ENCODE measurements at regions of chr1 and their contacts with region 1.

Region 1: GRCh38 chr1:26097696-26098095 is 13.9 kb upstream of the PDIK1L start:
- DNase-seq: no peak
- H3K4me3 ChIP-seq: no peak overlapping the region
- H3K27ac ChIP-seq: no peak overlapping the region
- H3K4me1 ChIP-seq: no peaks in the 10 kb centered on the region
- H3K27me3 ChIP-seq: no peaks in the 10 kb centered on the region
- CTCF ChIP-seq: no peak
- POLR2A ChIP-seq: no peak

Region 2: GRCh38 chr1:26053718-26054560 is 43.8 kb before region 1 on chr1:
- intact Hi-C with region 1: loop called (anchors 2 kb)
- DNase-seq: no peak
- H3K4me3 ChIP-seq: no peak overlapping the region
- H3K27ac ChIP-seq: no peak overlapping the region
- H3K4me1 ChIP-seq: no peaks in the 10 kb centered on the region
- H3K27me3 ChIP-seq: peaks cover 0 to 4% of the 10 kb centered on the region in 2 donors
- CTCF ChIP-seq: no peak
- POLR2A ChIP-seq: no peak

Region 3: DNA sequence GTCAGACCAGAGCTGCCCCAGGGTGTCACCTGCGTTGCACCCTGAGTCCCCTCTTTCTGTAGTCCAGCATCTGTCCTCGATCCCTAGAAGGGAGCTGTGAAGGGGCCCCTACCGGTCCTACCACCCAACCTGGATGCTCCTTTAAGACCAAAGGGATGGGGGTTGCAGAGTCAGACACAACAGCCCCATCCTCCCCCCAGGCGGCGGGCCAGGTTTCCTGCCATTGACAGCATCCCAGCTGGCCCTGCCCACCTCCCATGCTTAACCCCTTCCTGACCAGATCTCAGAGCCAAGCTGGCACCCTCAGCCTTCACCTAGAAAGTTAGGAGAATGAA is 59.0 kb after region 1 on chr1:
- intact Hi-C with region 1: loop called (anchors 10 kb)
- DNase-seq: no peak
- H3K4me3 ChIP-seq: peak overlapping the region; percentile 15 to 47 (median 24)
- H3K27ac ChIP-seq: peak overlapping the region in 1 of 2 donors; percentile 73
- H3K4me1 ChIP-seq: no peaks in the 10 kb centered on the region
- H3K27me3 ChIP-seq: peaks cover 0 to 19% of the 10 kb centered on the region in 2 donors
- CTCF ChIP-seq: no peak
- POLR2A ChIP-seq: no peak